ENCODE measurements at regions of chr6 and their contacts with region 1.

Region 1: DNA sequence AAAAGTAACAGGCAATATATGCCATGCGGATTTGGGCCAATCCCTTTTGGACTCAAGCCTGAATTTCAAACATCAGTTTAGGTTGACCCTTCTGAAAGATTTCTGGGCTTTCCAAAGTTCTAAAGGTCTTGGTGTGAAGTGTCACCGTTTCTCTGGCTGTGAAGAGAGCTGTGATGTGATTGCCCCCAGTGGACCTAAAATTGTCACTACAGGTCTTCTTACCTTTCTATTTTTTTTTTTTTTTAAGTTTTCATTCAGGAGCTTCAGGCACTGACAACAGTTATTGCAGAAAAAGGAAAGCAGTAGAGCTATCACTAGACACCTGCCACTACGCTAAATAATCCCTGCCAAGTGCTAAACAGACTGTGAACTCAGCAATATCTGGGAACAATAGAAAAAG is 75.7 kb upstream of the OPRM1 start:
- DNase-seq: no peak
- ATAC-seq: no peak
- H3K4me3 ChIP-seq: no peak overlapping the region
- H3K27ac ChIP-seq: no peak overlapping the region
- H3K4me1 ChIP-seq: no peaks in the 10 kb centered on the region
- H3K27me3 ChIP-seq: no peaks in the 10 kb centered on the region
- CTCF ChIP-seq: peak in 1 of 3 experiments; percentile 32; a peak in 1 of 6 replicates
- EP300 ChIP-seq: no peak
- POLR2A ChIP-seq: no peak
- RAD21 ChIP-seq: no peak

Region 2: GRCh38 chr6:153698001-153698400 is 265.4 kb before region 1 on chr6:
- CTCF ChIA-PET with region 1: no interaction called
- POLR2A ChIA-PET with region 1: no interaction called
- RAD21 ChIA-PET with region 1: no interaction called
- SMC1A ChIA-PET with region 1: no interaction called
- in situ Hi-C with region 1: no loop called
- intact Hi-C with region 1: no loop called
- DNase-seq: no peak
- ATAC-seq: no peak
- H3K4me3 ChIP-seq: no peak overlapping the region
- H3K27ac ChIP-seq: no peak overlapping the region
- H3K4me1 ChIP-seq: no peaks in the 10 kb centered on the region
- H3K27me3 ChIP-seq: no peaks in the 10 kb centered on the region
- CTCF ChIP-seq: no peak
- EP300 ChIP-seq: no peak
- POLR2A ChIP-seq: no peak
- RAD21 ChIP-seq: no peak

Region 3: GRCh38 chr6:153947808-153948447 is 15.4 kb before region 1 on chr6:
- CTCF ChIA-PET with region 1: interaction called, 12 read pairs
- POLR2A ChIA-PET with region 1: no interaction called
- RAD21 ChIA-PET with region 1: no interaction called
- SMC1A ChIA-PET with region 1: interaction called, 3 read pairs
- in situ Hi-C with region 1: no loop called
- intact Hi-C with region 1: no loop called
- DNase-seq: no peak
- ATAC-seq: 0 out of 3 replicates have a peak, but pooled peaks have one; percentile 42
- H3K4me3 ChIP-seq: no peak overlapping the region
- H3K27ac ChIP-seq: no peak overlapping the region
- H3K4me1 ChIP-seq: no peaks in the 10 kb centered on the region
- H3K27me3 ChIP-seq: no peaks in the 10 kb centered on the region; a peak in 1 of 4 replicates
- CTCF ChIP-seq: peak; percentile 78 to 96 (median 95)
- EP300 ChIP-seq: no peak
- POLR2A ChIP-seq: no peak
- RAD21 ChIP-seq: peak; percentile 72